ENCODE measurements at regions of chr2 and their contacts with region 1.

Region 1: GRCh38 chr2:88055371-88056128 is at the start of gene KRCC1:
- DNase-seq: peak; percentile 88
- ATAC-seq: peak; percentile 97
- H3K4me3 ChIP-seq: peak within 1 kb of the TSS; percentile 93
- H3K27ac ChIP-seq: peak within 1 kb of the TSS; percentile 94
- H3K4me1 ChIP-seq: peaks cover 4% of the 10 kb centered on the region
- H3K27me3 ChIP-seq: no peaks in the 10 kb centered on the region
- CTCF ChIP-seq: no peak
- EP300 ChIP-seq: no peak
- POLR2A ChIP-seq: peak; percentile 99
- RAD21 ChIP-seq: no peak
- polyA plus RNA-seq, gene KRCC1: 12.4 to 14.0 TPM

Region 2: DNA sequence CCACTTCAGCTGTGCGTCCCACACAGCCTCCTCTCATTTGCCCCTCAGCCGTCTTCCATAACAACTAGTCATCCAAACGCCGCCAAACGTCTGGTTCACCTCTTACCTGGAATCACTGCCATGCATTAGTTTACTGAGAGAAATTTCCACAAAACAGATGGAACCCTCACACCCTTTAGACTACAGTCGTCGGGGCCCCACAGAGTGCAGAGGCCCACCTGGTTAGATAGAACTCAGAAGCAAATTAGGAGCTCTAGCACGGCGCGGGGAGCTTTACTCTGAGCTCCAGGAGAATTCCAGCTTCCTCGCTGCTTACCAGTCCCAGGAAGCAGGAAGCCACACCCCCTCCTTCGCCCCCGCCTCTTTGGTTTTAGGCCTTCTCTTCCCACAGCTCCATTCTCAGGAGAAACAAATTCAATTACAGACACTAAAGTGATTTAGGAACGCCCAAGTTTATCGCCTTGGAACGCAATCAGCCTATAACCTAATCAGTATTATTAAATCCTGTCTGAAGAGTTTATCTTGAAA is 48.6 kb before region 1 on chr2:
- CTCF ChIA-PET with region 1: interaction called, 4 read pairs
- POLR2A ChIA-PET with region 1: no interaction called
- RAD21 ChIA-PET with region 1: no interaction called
- SMC1A ChIA-PET with region 1: interaction called, 6 read pairs
- in situ Hi-C with region 1: loop called (anchors 5 kb)
- intact Hi-C with region 1: no loop called
- DNase-seq: no peak
- ATAC-seq: no peak
- H3K4me3 ChIP-seq: no peak overlapping the region
- H3K27ac ChIP-seq: no peak overlapping the region
- H3K4me1 ChIP-seq: no peaks in the 10 kb centered on the region
- H3K27me3 ChIP-seq: no peaks in the 10 kb centered on the region; a peak in 1 of 4 replicates
- CTCF ChIP-seq: no peak
- EP300 ChIP-seq: no peak
- POLR2A ChIP-seq: no peak
- RAD21 ChIP-seq: no peak

Region 3: DNA sequence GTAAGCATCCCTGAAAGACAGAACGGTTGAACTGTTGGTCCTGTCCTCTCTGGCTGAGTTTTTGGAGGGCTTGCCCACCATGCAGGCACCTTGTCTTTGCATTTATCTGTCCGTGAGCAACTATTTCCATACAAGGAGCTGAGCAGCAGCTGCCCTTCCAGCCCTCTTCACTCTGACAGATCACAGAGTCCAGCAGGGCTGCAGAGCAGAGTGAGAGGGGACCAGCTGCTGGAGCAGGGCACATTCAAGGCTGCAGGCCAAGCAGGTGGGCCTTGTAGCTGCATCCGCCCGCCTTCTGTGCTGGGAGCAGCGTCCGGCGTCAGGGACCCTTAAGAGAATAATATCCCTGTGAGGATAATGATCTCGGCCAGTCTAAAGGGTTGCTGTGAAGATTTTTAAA is 21.5 kb after region 1 on chr2:
- CTCF ChIA-PET with region 1: interaction called, 11 read pairs
- POLR2A ChIA-PET with region 1: no interaction called
- RAD21 ChIA-PET with region 1: no interaction called
- SMC1A ChIA-PET with region 1: interaction called, 5 read pairs
- in situ Hi-C with region 1: no loop called
- intact Hi-C with region 1: no loop called
- DNase-seq: no peak
- ATAC-seq: no peak
- H3K4me3 ChIP-seq: no peak overlapping the region
- H3K27ac ChIP-seq: no peak overlapping the region
- H3K4me1 ChIP-seq: no peaks in the 10 kb centered on the region
- H3K27me3 ChIP-seq: peaks cover 0 to 2% of the 10 kb centered on the region in 2 experiments; a peak in 1 of 4 replicates
- CTCF ChIP-seq: no peak
- EP300 ChIP-seq: no peak
- POLR2A ChIP-seq: no peak
- RAD21 ChIP-seq: no peak

Region 4: DNA sequence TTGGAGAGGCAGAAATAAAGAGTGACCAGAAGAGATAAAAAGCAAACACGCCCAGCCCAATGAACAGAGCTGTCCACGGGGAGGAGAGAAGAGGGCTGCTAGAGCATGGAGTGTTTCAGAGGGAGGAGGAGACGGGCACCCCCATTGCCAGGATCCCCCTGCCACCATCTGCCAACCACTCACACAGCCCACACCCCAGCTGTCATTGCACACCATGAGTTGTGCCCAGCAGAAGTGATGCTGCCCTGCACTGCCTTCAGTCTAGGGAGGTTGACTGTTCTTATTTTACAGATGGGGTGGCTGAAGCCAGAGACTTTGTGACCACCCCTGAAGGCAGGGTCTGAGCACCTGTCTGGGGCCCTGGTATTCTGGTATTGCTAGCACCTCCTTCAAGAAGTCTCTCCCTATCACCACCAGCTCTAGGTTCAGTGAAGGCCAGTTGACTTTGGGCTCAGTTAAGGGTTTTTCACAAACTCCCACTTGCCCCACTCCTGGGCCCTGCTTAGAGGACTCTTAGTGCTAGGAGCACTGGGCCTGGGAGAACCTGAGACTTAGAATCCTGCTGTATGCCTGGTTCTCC is 69.9 kb after region 1 on chr2:
- CTCF ChIA-PET with region 1: no interaction called
- POLR2A ChIA-PET with region 1: no interaction called
- RAD21 ChIA-PET with region 1: no interaction called
- SMC1A ChIA-PET with region 1: no interaction called
- in situ Hi-C with region 1: no loop called
- intact Hi-C with region 1: no loop called
- DNase-seq: no peak
- ATAC-seq: no peak
- H3K4me3 ChIP-seq: no peak overlapping the region
- H3K27ac ChIP-seq: no peak overlapping the region
- H3K4me1 ChIP-seq: no peaks in the 10 kb centered on the region
- H3K27me3 ChIP-seq: no peaks in the 10 kb centered on the region; a peak in 1 of 4 replicates
- CTCF ChIP-seq: no peak
- EP300 ChIP-seq: no peak
- POLR2A ChIP-seq: no peak
- RAD21 ChIP-seq: no peak

Region 5: DNA sequence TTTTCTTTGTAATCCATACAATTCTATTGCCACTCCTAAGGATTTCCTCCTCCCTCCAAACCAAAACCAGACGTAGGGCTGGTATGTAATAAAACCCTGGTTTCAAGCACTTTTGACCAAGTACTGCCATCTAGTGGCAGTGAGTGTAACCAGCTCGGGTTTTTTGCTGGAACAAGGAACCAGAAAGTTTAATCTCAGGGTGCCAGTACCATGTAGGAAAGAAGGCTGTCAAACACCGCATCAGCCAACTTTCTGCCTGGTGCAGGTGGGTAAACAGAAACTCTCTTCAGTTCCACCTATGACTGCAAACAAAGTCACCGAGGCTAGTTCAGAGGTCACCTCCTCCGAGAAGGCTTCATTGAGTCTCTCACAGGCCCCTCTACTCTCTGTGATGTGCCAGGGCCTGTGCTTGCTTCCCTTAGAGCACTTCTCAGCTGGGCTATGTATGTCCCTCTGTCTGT is 104.4 kb after region 1 on chr2:
- CTCF ChIA-PET with region 1: interaction called, 163 read pairs
- POLR2A ChIA-PET with region 1: no interaction called
- RAD21 ChIA-PET with region 1: interaction called, 52 read pairs
- SMC1A ChIA-PET with region 1: interaction called, 29 read pairs
- in situ Hi-C with region 1: loop called (anchors 5 kb)
- intact Hi-C with region 1: loop called (anchors 1 kb)
- DNase-seq: peak; percentile 4
- ATAC-seq: peak; percentile 79
- H3K4me3 ChIP-seq: no peak overlapping the region
- H3K27ac ChIP-seq: no peak overlapping the region
- H3K4me1 ChIP-seq: no peaks in the 10 kb centered on the region
- H3K27me3 ChIP-seq: no peaks in the 10 kb centered on the region
- CTCF ChIP-seq: peak; percentile 73 to 83 (median 75); a peak in 5 of 6 replicates
- EP300 ChIP-seq: no peak
- POLR2A ChIP-seq: no peak
- RAD21 ChIP-seq: peak; percentile 84

Region 6: DNA sequence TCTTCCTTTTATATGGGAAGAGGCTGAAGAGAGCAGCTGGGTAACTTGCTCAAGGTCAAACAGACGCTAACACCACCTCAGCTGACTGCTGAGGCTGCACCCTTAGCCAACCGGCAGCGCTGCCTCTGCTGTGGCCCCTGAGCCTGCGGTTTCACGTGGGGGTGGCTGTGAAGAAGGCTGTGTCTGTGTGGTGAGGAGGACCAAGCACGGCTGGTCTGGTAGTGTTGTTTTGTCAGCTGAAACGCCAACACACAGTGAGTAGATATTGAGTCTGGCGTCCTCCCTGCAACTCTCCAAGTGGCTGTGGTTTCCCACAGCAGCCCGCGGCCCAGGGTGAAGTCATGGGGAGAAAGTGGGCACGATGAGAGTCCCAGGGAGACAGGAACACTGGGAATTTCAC is 184.2 kb after region 1 on chr2:
- CTCF ChIA-PET with region 1: no interaction called
- POLR2A ChIA-PET with region 1: no interaction called
- RAD21 ChIA-PET with region 1: no interaction called
- SMC1A ChIA-PET with region 1: no interaction called
- in situ Hi-C with region 1: no loop called
- intact Hi-C with region 1: no loop called
- DNase-seq: no peak
- ATAC-seq: peak; percentile 95
- H3K4me3 ChIP-seq: no peak overlapping the region
- H3K27ac ChIP-seq: no peak overlapping the region
- H3K4me1 ChIP-seq: no peaks in the 10 kb centered on the region
- H3K27me3 ChIP-seq: no peaks in the 10 kb centered on the region
- CTCF ChIP-seq: no peak
- EP300 ChIP-seq: no peak; a peak in 1 of 4 replicates
- POLR2A ChIP-seq: no peak
- RAD21 ChIP-seq: no peak

Region 7: GRCh38 chr2:88329815-88330603 is 274.5 kb after region 1 on chr2:
- CTCF ChIA-PET with region 1: no interaction called
- POLR2A ChIA-PET with region 1: no interaction called
- RAD21 ChIA-PET with region 1: no interaction called
- SMC1A ChIA-PET with region 1: interaction called, 4 read pairs
- in situ Hi-C with region 1: no loop called
- intact Hi-C with region 1: loop called (anchors 10 kb)
- DNase-seq: peak; percentile 49
- ATAC-seq: peak; percentile 89
- H3K4me3 ChIP-seq: no peak overlapping the region
- H3K27ac ChIP-seq: no peak overlapping the region
- H3K4me1 ChIP-seq: no peaks in the 10 kb centered on the region
- H3K27me3 ChIP-seq: no peaks in the 10 kb centered on the region
- CTCF ChIP-seq: no peak
- EP300 ChIP-seq: no peak
- POLR2A ChIP-seq: no peak
- RAD21 ChIP-seq: no peak